Mammary epithelial cell (primary cell): ENCODE measurements at regions of chr15 and their contacts with region 1.

Region 1: GRCh38 chr15:79896637-79897379 is at the start of gene MTHFS:
- DNase-seq: peak; percentile 80
- H3K4me3 ChIP-seq: peak within 1 kb of the TSS; percentile 51 to 73 (median 59)
- H3K27ac ChIP-seq: peak within 1 kb of the TSS; percentile 76
- H3K4me1 ChIP-seq: peaks cover 12% of the 10 kb centered on the region
- H3K27me3 ChIP-seq: no peaks in the 10 kb centered on the region
- CTCF ChIP-seq: peak; percentile 21 to 64
- total RNA-seq, gene MTHFS: 21.7 to 32.8 TPM

Region 2: DNA sequence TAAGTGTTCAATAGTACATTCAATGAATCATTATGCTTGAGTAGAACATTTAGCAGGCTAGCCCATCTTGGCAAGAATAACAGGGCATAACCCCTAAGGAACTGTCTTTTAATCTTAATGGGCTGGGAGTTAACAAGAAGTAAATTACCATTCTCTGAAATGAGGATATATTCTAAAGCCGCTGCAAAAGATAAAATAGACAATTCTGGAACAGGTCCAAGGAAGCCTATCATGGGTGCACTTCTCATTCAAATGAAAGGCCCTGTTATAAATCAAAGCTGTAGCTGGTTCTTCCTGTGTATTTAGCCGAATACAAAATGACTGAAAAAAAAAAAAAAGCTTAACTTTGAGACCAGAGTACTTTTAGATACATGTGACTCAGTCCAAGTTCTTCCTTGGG is 15.6 kb before region 1 on chr15:
- CTCF ChIA-PET with region 1: no interaction called
- dilution Hi-C with region 1: no loop called
- in situ Hi-C with region 1: no loop called
- intact Hi-C with region 1: no loop called
- DNase-seq: no peak
- H3K4me3 ChIP-seq: no peak overlapping the region
- H3K27ac ChIP-seq: no peak overlapping the region
- H3K4me1 ChIP-seq: no peaks in the 10 kb centered on the region
- H3K27me3 ChIP-seq: no peaks in the 10 kb centered on the region
- CTCF ChIP-seq: no peak

Region 3: DNA sequence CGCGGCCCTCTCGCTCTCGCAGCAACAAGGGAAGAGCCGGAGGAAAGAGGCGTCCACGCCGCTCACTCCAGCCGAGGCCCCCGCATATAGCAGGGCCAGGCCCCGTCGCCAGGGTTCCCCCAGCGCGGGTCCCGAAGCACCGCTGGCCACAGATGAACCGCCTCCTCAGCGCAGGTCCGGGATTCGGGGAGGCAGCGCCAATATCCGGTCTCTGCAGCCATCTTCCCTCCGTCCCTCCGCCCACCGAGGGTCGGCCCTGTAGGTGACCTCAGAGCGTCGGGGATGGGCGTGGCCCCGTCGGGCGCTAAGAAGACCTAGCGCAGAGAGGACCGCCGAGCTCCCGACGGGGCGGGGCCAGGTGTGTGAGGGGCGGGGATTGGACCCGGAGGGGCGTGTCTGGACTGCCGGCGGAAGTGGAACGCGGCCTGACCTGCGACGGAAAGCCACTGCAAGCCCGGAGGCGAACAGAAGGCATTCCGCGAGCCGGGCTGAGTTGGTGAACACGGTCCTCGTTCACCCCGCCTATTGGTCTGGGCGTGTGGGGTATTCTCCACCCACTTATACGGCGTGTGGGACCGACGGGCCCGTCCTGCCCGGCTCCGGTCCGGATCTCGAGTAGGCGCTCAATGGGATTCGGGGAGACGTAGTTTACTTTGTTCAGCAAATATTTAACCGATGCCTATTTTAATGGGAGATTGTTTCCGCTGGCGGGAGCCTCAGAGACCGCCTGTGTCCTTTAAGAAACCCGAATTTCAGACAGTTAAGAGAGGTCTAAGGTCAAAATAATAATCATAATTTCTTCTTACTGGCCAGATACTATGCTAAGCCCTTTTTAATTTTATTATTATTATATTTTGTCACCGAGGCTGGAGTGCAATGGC is 26.9 kb after region 1 on chr15:
- CTCF ChIA-PET with region 1: no interaction called
- dilution Hi-C with region 1: no loop called
- in situ Hi-C with region 1: no loop called
- intact Hi-C with region 1: loop called (anchors 1 kb)
- DNase-seq: peak; percentile 97
- H3K4me3 ChIP-seq: peak overlapping the region; percentile 92 to 99 (median 95)
- H3K27ac ChIP-seq: peak overlapping the region; percentile 78
- H3K4me1 ChIP-seq: no peaks in the 10 kb centered on the region
- H3K27me3 ChIP-seq: no peaks in the 10 kb centered on the region
- CTCF ChIP-seq: no peak

Region 4: DNA sequence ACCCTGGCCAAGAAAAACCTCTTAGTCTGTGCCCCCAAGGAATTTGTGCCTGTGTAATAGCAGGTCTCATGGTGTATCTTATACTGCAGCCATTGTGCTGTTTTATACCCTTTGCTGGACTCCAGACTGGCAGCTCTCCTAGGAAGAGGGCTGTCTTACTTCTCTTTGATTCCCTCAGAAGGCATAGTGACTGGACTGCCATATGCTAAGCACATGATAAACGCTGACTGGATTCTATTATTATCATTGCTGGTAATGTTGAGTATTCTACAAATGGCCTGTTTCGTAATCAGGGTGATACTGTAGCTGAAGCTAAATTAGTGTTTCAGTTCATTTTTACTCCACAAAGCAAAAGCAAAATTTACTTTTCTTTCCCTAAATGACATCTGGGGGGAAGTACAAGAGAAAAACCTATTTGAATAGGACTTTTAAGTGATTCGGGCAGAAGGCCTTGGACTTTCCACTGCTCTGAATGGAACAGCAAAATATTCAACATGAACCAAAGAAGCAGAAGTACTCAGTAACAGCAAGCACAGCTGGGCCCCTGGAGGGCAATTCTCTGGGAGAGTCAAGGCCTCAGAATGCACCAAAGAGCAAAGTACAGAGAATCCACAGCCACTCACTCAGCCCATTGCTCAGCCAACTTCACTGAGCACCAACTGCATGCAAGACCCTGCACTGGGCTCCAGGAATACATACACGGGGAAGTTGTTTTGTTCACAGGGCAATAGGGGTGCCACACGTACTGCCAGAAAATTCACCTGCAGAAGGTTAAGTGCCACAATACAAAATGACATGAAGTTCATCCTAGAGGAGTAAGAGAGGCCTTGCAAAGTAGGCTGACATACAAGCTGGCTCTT is 82.1 kb after region 1 on chr15:
- CTCF ChIA-PET with region 1: no interaction called
- dilution Hi-C with region 1: no loop called
- in situ Hi-C with region 1: loop called in 1 of 2 experiments (anchors 10 kb)
- intact Hi-C with region 1: no loop called
- DNase-seq: peak; percentile 64
- H3K4me3 ChIP-seq: no peak overlapping the region
- H3K27ac ChIP-seq: no peak overlapping the region
- H3K4me1 ChIP-seq: peaks cover 8% of the 10 kb centered on the region
- H3K27me3 ChIP-seq: no peaks in the 10 kb centered on the region
- CTCF ChIP-seq: no peak